ENCODE measurements at regions of chr12 and their contacts with region 1.

Region 1: DNA sequence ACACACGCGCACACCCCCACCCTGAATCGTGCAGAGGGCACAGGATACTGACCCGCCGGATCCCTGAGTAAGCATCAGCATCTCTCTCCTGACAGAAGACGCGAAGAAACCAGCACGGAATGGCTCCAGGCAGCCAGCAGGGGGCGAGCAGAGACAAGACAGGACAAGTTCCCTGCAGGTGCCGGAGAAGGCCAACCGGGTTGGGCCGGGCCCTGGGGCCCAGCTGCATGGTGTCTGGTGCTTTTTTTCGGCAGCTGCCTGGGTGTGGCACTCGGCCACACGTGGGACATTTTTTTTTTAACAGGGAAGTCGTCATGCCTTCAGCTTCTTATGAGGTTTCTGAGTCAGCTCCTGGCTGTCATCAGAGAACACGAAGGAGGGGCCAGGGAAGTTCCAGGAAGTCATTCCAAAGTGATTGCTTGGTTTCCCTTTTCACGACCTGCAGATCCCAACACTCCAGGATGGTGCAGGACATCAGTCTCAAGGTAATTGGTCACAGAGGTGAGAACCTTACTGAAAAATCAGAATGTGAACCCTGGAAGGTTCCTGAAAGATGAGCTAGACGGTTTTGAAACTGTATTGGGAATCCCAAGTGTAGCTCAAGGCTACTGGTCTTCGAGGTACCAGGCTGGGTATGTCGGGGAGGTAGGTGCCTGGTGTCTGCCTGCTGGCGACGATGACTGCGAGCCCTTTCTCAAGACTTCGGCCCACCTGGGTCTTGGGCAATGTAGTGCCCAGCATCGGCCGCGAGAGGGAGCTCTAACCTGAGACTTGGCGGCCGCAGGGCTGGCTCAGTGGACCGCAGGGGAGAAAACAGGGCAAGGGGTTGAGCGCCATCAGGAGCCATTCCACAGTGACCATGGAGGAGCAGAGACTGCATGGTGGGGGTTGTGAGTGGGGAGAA is 190.8 kb upstream of the PRMT8 start:
- DNase-seq: peak; percentile 85 to 93
- H3K4me3 ChIP-seq: peak overlapping the region in 3 of 4 experiments; percentile 7 to 42 (median 11); a peak in 3 of 8 replicates
- H3K27ac ChIP-seq: no peak overlapping the region
- H3K4me1 ChIP-seq: peaks cover 0 to 13% (median 4%) of the 10 kb centered on the region in 4 experiments; a peak in 5 of 7 replicates
- H3K27me3 ChIP-seq: peaks cover 0 to 4% (median 2%) of the 10 kb centered on the region in 4 experiments; a peak in 2 of 7 replicates
- CTCF ChIP-seq: peak in 2 of 3 experiments; percentile 97 to 98; a peak in 3 of 4 replicates
- EP300 ChIP-seq: peak in 1 of 2 experiments; percentile 33; a peak in 1 of 3 replicates
- POLR2A ChIP-seq: no peak
- RAD21 ChIP-seq: peak; percentile 93 to 98

Region 2: GRCh38 chr12:3049611-3050249 is 250.5 kb before region 1 on chr12:
- CTCF ChIA-PET with region 1: no interaction called
- POLR2A ChIA-PET with region 1: no interaction called
- DNase-seq: no peak
- H3K4me3 ChIP-seq: no peak overlapping the region
- H3K27ac ChIP-seq: no peak overlapping the region
- H3K4me1 ChIP-seq: peaks cover 0 to 5% (median 2%) of the 10 kb centered on the region in 4 experiments; a peak in 3 of 7 replicates
- H3K27me3 ChIP-seq: no peaks in the 10 kb centered on the region
- CTCF ChIP-seq: no peak
- EP300 ChIP-seq: no peak
- POLR2A ChIP-seq: no peak
- RAD21 ChIP-seq: no peak

Region 3: GRCh38 chr12:3148366-3149000 is 151.7 kb before region 1 on chr12:
- CTCF ChIA-PET with region 1: no interaction called
- POLR2A ChIA-PET with region 1: no interaction called
- DNase-seq: no peak
- H3K4me3 ChIP-seq: no peak overlapping the region
- H3K27ac ChIP-seq: no peak overlapping the region
- H3K4me1 ChIP-seq: peaks cover 8 to 28% (median 26%) of the 10 kb centered on the region in 4 experiments
- H3K27me3 ChIP-seq: no peaks in the 10 kb centered on the region; a peak in 1 of 7 replicates
- CTCF ChIP-seq: no peak
- EP300 ChIP-seq: no peak
- POLR2A ChIP-seq: no peak
- RAD21 ChIP-seq: no peak; a peak in 1 of 4 replicates

Region 4: GRCh38 chr12:3231399-3231876 is 68.7 kb before region 1 on chr12:
- CTCF ChIA-PET with region 1: interaction called, 10 read pairs
- POLR2A ChIA-PET with region 1: no interaction called
- DNase-seq: peak in 1 of 2 experiments; percentile 81
- H3K4me3 ChIP-seq: peak overlapping the region in 1 of 4 experiments; percentile 31; a peak in 2 of 8 replicates
- H3K27ac ChIP-seq: no peak overlapping the region
- H3K4me1 ChIP-seq: peaks cover 0 to 31% (median 17%) of the 10 kb centered on the region in 4 experiments; a peak in 6 of 7 replicates
- H3K27me3 ChIP-seq: no peaks in the 10 kb centered on the region; a peak in 1 of 7 replicates
- CTCF ChIP-seq: no peak
- EP300 ChIP-seq: no peak
- POLR2A ChIP-seq: no peak
- RAD21 ChIP-seq: no peak

Region 5: DNA sequence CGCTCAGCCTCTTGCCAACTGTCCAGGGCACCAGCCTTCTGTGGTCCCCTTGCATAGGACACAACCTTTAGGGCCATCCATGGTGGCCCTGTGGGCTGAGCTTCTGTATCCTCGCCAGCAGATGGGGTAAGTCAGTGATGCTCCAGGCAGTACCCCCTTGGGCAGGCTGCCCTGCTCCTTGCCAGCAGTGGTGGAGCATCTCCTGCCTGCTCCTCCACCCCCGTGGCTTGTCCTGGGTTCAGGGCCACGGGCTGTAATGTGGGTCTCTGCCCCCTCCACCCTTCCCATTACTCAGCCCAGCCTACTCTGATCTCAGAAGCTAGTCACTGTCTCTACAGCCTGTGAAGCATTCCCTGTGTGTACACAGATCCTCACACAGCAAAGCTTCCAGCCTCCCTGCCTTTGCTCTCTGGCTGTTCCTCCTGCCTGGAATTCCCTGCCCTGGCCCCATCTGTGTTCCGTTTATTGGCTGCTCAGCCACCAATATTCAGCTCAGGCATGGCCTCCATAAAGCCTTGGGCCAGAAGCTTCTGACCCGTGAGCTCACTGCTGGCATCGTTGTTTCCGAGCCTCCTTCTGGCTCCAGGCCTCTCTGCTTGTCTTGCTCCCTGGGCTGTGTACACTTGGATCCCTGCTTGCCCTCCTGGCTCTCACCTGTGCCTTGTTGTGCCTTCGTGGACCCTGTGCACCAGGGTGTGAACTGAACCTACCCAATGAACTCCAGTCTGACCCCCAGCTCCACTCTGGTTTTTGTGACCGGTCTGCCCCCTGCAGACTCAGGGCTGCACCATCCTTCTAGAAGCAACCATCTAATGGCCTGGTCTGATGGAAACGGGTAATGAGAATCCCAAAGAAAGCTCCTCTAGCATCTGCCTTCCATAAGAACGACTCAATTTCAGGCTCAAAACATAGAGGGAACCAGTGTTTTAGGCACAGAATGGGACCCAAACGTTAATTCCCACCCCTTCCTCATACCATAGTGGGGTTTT is 13.8 kb after region 1 on chr12:
- CTCF ChIA-PET with region 1: interaction called, 166 read pairs
- POLR2A ChIA-PET with region 1: interaction called, 3 read pairs
- DNase-seq: no peak
- H3K4me3 ChIP-seq: no peak overlapping the region
- H3K27ac ChIP-seq: no peak overlapping the region
- H3K4me1 ChIP-seq: peaks cover 0 to 3% (median 0%) of the 10 kb centered on the region in 4 experiments; a peak in 2 of 7 replicates
- H3K27me3 ChIP-seq: no peaks in the 10 kb centered on the region; a peak in 2 of 7 replicates
- CTCF ChIP-seq: peak in 2 of 3 experiments; percentile 84 to 86; a peak in 3 of 4 replicates
- EP300 ChIP-seq: no peak
- POLR2A ChIP-seq: no peak
- RAD21 ChIP-seq: peak; percentile 76 to 82

Region 6: GRCh38 chr12:3365463-3366411 is 65.6 kb after region 1 on chr12:
- CTCF ChIA-PET with region 1: interaction called, 14 read pairs
- POLR2A ChIA-PET with region 1: no interaction called
- DNase-seq: peak in 1 of 2 experiments; percentile 75
- H3K4me3 ChIP-seq: peak overlapping the region; percentile 42 to 69 (median 44)
- H3K27ac ChIP-seq: no peak overlapping the region
- H3K4me1 ChIP-seq: peaks cover 0 to 7% (median 4%) of the 10 kb centered on the region in 4 experiments; a peak in 5 of 7 replicates
- H3K27me3 ChIP-seq: peaks cover 12 to 35% (median 34%) of the 10 kb centered on the region in 4 experiments
- CTCF ChIP-seq: no peak
- EP300 ChIP-seq: no peak
- POLR2A ChIP-seq: no peak
- RAD21 ChIP-seq: no peak

Region 7: GRCh38 chr12:3491938-3492792 is 192.0 kb after region 1 on chr12:
- CTCF ChIA-PET with region 1: interaction called, 10 read pairs
- POLR2A ChIA-PET with region 1: no interaction called
- DNase-seq: peak; percentile 51 to 86
- H3K4me3 ChIP-seq: peak overlapping the region; percentile 57 to 76 (median 64)
- H3K27ac ChIP-seq: no peak overlapping the region
- H3K4me1 ChIP-seq: peaks cover 9 to 30% (median 14%) of the 10 kb centered on the region in 4 experiments
- H3K27me3 ChIP-seq: peaks cover 39 to 69% (median 61%) of the 10 kb centered on the region in 4 experiments
- CTCF ChIP-seq: peak in 1 of 3 experiments; percentile 15; a peak in 1 of 4 replicates
- EP300 ChIP-seq: peak in 1 of 2 experiments; percentile 13; a peak in 1 of 3 replicates
- POLR2A ChIP-seq: no peak
- RAD21 ChIP-seq: peak; percentile 25 to 27; a peak in 2 of 4 replicates

Region 8: GRCh38 chr12:3611860-3612703 is 311.9 kb after region 1 on chr12:
- CTCF ChIA-PET with region 1: interaction called, 22 read pairs
- POLR2A ChIA-PET with region 1: interaction called, 3 read pairs
- DNase-seq: no peak
- H3K4me3 ChIP-seq: no peak overlapping the region
- H3K27ac ChIP-seq: no peak overlapping the region
- H3K4me1 ChIP-seq: peaks cover 0 to 9% (median 2%) of the 10 kb centered on the region in 4 experiments; a peak in 2 of 7 replicates
- H3K27me3 ChIP-seq: peaks cover 0 to 2% (median 0%) of the 10 kb centered on the region in 4 experiments; a peak in 4 of 7 replicates
- CTCF ChIP-seq: no peak
- EP300 ChIP-seq: no peak
- POLR2A ChIP-seq: no peak
- RAD21 ChIP-seq: no peak

Region 9: DNA sequence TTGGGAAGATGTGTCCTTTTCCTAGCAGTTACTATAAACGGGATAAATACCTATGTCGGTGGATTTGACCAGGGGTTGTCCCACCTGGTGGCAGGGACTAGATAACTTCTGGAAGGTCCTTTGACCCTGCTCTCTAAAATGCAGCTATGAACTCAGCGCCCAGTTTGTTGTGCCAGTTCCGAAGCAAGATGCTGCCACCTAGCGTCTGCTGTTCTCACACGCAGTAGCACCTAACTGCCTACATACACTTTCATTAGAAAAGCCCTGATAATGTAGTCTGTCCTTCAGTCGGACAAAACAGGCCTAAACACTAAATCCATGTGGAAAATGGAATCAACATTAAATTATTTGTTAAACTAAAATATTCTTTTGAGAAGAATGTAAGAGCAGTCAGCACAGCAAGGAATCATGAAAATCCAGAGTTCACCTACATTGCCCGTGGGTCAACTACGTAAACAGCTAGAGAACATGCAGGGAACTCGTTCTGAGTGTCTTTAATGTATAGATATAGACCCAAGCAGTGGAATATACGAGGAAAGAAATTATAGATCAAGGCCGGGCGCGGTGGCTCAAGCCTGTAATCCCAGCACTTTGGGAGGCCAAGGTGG is 503.8 kb after region 1 on chr12:
- CTCF ChIA-PET with region 1: interaction called, 38 read pairs
- POLR2A ChIA-PET with region 1: interaction called, 3 read pairs
- DNase-seq: peak; percentile 38 to 79
- H3K4me3 ChIP-seq: no peak overlapping the region
- H3K27ac ChIP-seq: no peak overlapping the region
- H3K4me1 ChIP-seq: no peaks in the 10 kb centered on the region
- H3K27me3 ChIP-seq: no peaks in the 10 kb centered on the region
- CTCF ChIP-seq: peak; percentile 78 to 91 (median 90)
- EP300 ChIP-seq: no peak
- POLR2A ChIP-seq: no peak
- RAD21 ChIP-seq: peak; percentile 91 to 94

Measured in H1 (cell line).